ENCODE measurements at regions of chr4 and their contacts with region 1.

Region 1: DNA sequence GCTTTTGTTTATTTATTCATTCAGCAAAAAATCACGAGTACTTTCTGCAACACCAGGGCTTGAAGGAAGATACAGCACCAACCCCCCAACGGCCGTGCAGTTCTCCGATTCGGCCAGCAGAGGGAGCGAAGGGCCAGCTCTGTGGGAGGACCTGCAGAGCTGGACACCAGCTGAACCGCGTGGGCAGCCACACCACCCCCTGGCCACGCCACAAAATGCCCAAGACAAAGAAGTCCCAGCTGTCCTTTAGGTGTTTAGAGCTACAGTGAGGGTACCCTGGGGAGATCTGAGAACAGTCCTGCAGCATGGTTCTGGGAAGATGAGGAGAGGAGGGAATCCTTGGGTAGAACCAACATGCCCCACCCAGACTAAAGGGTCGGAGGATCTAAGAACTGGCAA is 83.1 kb downstream of the RELL1 start:
- DNase-seq: peak; percentile 41
- ATAC-seq: peak; percentile 97
- H3K4me3 ChIP-seq: no peak overlapping the region
- H3K27ac ChIP-seq: no peak overlapping the region
- H3K4me1 ChIP-seq: peaks cover 3 to 21% of the 10 kb centered on the region in 2 experiments; a peak in 2 of 4 replicates
- H3K27me3 ChIP-seq: no peaks in the 10 kb centered on the region
- CTCF ChIP-seq: peak; percentile 94 to 99 (median 99)
- POLR2A ChIP-seq: no peak
- RAD21 ChIP-seq: peak; percentile 98

Region 2: GRCh38 chr4:36081185-36081584 is 1521.9 kb before region 1 on chr4:
- CTCF ChIA-PET with region 1: no interaction called
- POLR2A ChIA-PET with region 1: no interaction called
- RAD21 ChIA-PET with region 1: no interaction called
- intact Hi-C with region 1: no loop called
- DNase-seq: no peak
- ATAC-seq: no peak
- H3K4me3 ChIP-seq: no peak overlapping the region
- H3K27ac ChIP-seq: no peak overlapping the region
- H3K4me1 ChIP-seq: no peaks in the 10 kb centered on the region
- H3K27me3 ChIP-seq: no peaks in the 10 kb centered on the region
- CTCF ChIP-seq: no peak
- POLR2A ChIP-seq: no peak
- RAD21 ChIP-seq: no peak

Region 3: GRCh38 chr4:37648096-37648817 is 45.2 kb after region 1 on chr4:
- CTCF ChIA-PET with region 1: no interaction called
- POLR2A ChIA-PET with region 1: no interaction called
- RAD21 ChIA-PET with region 1: no interaction called
- intact Hi-C with region 1: loop called (anchors 5 kb)
- DNase-seq: peak; percentile 77
- ATAC-seq: peak; percentile 96
- H3K4me3 ChIP-seq: peak overlapping the region in 1 of 2 experiments; percentile 32; a peak in 2 of 4 replicates
- H3K27ac ChIP-seq: peak overlapping the region; percentile 16; the same call in 1 of the 2 replicates
- H3K4me1 ChIP-seq: peaks cover 17 to 39% of the 10 kb centered on the region in 2 experiments
- H3K27me3 ChIP-seq: no peaks in the 10 kb centered on the region
- CTCF ChIP-seq: no peak
- POLR2A ChIP-seq: no peak
- RAD21 ChIP-seq: peak; percentile 31

Region 4: DNA sequence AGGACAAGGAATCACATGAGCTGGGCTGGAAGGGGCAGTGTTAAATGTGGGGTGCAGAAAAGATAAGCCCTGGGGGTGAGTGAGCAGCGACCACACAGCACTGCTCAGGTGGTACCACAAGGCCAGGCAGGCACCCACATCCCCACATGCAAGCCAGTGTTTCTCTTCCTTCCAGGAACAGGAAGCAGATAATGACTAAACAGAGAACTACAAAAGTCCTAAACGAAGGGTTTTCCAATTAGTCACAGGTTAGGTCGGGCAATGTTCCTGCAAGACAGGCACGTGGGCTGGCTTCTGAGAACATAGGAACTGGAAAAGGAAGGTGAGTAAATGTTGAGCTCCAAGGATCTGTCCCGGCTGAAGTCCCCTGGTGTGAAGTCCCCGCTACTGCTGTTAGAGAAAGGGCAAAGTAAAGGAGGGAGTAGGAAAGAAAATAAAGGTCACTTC is 63.6 kb after region 1 on chr4:
- CTCF ChIA-PET with region 1: interaction called, 10 read pairs
- POLR2A ChIA-PET with region 1: interaction called, 4 read pairs
- RAD21 ChIA-PET with region 1: interaction called, 3 to 6 read pairs
- intact Hi-C with region 1: loop called (anchors 5 kb)
- DNase-seq: peak; percentile 96
- ATAC-seq: peak; percentile 93
- H3K4me3 ChIP-seq: peak overlapping the region in 1 of 2 experiments; percentile 16; a peak in 2 of 4 replicates
- H3K27ac ChIP-seq: peak overlapping the region; percentile 74
- H3K4me1 ChIP-seq: peaks cover 44 to 74% of the 10 kb centered on the region in 2 experiments
- H3K27me3 ChIP-seq: no peaks in the 10 kb centered on the region
- CTCF ChIP-seq: peak in 2 of 3 experiments; percentile 16 to 39; a peak in 3 of 6 replicates
- POLR2A ChIP-seq: no peak
- RAD21 ChIP-seq: peak; percentile 52

Region 5: DNA sequence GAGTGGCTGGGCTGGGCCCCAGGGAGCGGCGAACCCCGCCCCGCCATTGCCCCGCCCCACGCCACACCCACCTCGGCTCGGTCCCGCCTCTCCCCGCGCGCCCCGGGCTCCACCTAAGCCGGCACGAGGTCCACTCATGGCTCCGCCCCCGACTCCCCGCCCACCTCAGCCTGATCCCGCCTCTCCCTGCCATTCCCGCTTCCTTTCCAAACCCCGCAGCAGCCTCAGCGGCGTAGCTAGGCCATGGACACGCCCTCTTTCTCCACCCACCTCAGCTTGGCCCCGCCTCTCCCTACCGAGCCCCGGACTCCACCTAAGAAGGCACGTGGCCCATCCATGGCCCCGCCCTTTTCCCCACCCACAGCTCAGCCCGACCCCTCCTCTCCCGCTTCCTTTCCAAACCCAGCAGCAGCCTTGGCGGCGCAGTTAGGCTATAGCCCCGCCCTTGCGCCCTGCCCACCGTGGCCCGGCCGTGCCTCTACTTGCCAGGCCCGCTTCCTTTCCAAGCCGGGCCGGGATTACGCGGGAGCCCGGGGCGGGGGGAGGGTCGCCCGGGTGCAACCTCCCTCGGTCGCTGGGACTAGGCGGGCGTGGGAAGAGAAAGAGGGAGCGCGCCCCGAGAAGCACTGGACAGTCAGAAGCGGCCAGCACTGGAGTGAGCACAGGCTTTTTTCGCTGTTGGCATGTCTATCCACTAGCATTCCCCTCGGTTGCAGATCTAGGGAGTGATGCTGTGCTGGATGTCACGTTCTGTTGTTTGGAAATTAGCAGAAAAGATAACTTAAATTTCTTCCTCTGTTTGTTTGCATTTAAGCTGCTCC is 83.5 kb after region 1 on chr4 and contains the start of gene RELL1:
- CTCF ChIA-PET with region 1: interaction called, 5 read pairs
- POLR2A ChIA-PET with region 1: no interaction called
- RAD21 ChIA-PET with region 1: no interaction called
- intact Hi-C with region 1: loop called (anchors 5 kb)
- DNase-seq: peak; percentile 99
- ATAC-seq: peak; percentile 89
- H3K4me3 ChIP-seq: peak within 1 kb of the TSS; percentile 66 to 69
- H3K27ac ChIP-seq: peak within 1 kb of the TSS; percentile 65
- H3K4me1 ChIP-seq: peaks cover 0 to 24% of the 10 kb centered on the region in 2 experiments; a peak in 3 of 4 replicates
- H3K27me3 ChIP-seq: no peaks in the 10 kb centered on the region
- CTCF ChIP-seq: no peak
- POLR2A ChIP-seq: no peak
- RAD21 ChIP-seq: no peak
- total RNA-seq, gene RELL1: 30.2 TPM

Region 6: GRCh38 chr4:37793562-37793961 is 190.5 kb after region 1 on chr4:
- CTCF ChIA-PET with region 1: interaction called, 5 read pairs
- POLR2A ChIA-PET with region 1: no interaction called
- RAD21 ChIA-PET with region 1: no interaction called
- intact Hi-C with region 1: loop called (anchors 1 kb)
- DNase-seq: no peak
- ATAC-seq: peak; percentile 80
- H3K4me3 ChIP-seq: no peak overlapping the region
- H3K27ac ChIP-seq: no peak overlapping the region
- H3K4me1 ChIP-seq: no peaks in the 10 kb centered on the region
- H3K27me3 ChIP-seq: no peaks in the 10 kb centered on the region
- CTCF ChIP-seq: peak; percentile 55 to 65 (median 58); a peak in 5 of 6 replicates
- POLR2A ChIP-seq: no peak
- RAD21 ChIP-seq: peak; percentile 85

Region 7: DNA sequence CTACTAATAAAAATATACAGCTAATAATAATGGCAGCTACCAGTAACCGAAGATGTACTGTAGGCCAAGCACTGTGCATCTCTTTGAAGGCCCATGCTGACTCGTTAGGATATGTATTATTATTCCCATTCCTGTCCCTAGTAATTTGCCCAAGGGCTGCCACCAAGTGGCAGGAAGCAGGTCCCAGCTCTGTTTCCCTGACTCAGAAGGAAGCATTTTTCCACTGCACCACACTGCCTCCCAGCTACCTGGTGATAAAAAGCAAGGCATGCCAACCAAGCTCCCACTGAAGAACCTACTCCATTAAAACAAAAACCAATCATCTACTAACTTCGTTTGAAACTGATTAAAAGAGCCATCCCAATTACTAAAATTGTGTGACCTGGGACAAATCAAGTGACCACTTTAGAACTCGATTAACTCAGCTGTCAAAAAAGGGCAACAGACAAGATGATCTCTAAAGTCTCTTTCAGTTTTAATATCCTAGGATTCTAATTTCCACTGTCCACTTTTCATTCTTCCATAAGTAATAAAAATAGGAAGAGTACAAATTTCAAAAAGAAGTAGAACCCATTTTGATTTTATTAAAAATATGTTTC is 199.1 kb after region 1 on chr4:
- CTCF ChIA-PET with region 1: interaction called, 49 read pairs
- POLR2A ChIA-PET with region 1: interaction called, 10 read pairs
- RAD21 ChIA-PET with region 1: interaction called in 1 of 2 experiments, 14 read pairs
- intact Hi-C with region 1: loop called (anchors 1 kb)
- DNase-seq: peak; percentile 86
- ATAC-seq: peak; percentile 98
- H3K4me3 ChIP-seq: peak overlapping the region in 1 of 2 experiments; percentile 35; a peak in 2 of 4 replicates
- H3K27ac ChIP-seq: no peak overlapping the region
- H3K4me1 ChIP-seq: peaks cover 0 to 13% of the 10 kb centered on the region in 2 experiments; a peak in 2 of 4 replicates
- H3K27me3 ChIP-seq: no peaks in the 10 kb centered on the region
- CTCF ChIP-seq: peak; percentile 69 to 98 (median 79)
- POLR2A ChIP-seq: no peak
- RAD21 ChIP-seq: peak; percentile 90

Region 8: GRCh38 chr4:38034986-38035882 is 432.2 kb after region 1 on chr4:
- CTCF ChIA-PET with region 1: interaction called, 7 read pairs
- POLR2A ChIA-PET with region 1: no interaction called
- RAD21 ChIA-PET with region 1: no interaction called
- intact Hi-C with region 1: loop called (anchors 5 kb)
- DNase-seq: peak; percentile 44
- ATAC-seq: peak; percentile 65; the same call in 1 of the 2 replicates
- H3K4me3 ChIP-seq: no peak overlapping the region
- H3K27ac ChIP-seq: no peak overlapping the region
- H3K4me1 ChIP-seq: no peaks in the 10 kb centered on the region
- H3K27me3 ChIP-seq: no peaks in the 10 kb centered on the region
- CTCF ChIP-seq: peak; percentile 56 to 74 (median 69); a peak in 5 of 6 replicates
- POLR2A ChIP-seq: no peak
- RAD21 ChIP-seq: peak; percentile 79

Measured in HCT116 (cell line).